GM12878 (cell line): ENCODE measurements at regions of chr18 and their contacts with region 1.

Region 1: DNA sequence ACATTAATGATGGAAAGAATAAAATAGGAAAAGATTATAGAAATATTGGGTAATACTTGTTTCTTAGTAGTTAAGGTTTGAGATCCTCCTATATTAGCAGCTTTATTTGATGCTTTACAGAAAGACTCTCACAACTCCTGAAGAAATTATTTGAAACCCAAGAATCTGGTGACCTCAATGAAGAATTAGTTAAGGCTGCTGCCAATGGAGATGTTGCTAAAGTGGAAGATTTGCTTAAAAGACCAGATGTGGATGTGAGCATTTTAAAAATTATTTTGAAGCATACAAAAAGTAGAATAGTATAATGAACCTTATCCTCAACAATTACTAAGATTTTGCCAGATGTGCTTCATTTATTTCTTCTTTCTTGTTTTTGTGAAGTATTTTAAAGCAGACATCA is 59.1 kb downstream of the MIB1 start:
- DNase-seq: no peak
- ATAC-seq: no peak
- H3K4me3 ChIP-seq: no peak overlapping the region
- H3K27ac ChIP-seq: no peak overlapping the region
- H3K4me1 ChIP-seq: no peaks in the 10 kb centered on the region
- H3K27me3 ChIP-seq: no peaks in the 10 kb centered on the region
- CTCF ChIP-seq: no peak
- EP300 ChIP-seq: no peak
- POLR2A ChIP-seq: no peak
- RAD21 ChIP-seq: no peak

Region 2: GRCh38 chr18:21656402-21656801 is 143.3 kb before region 1 on chr18:
- CTCF ChIA-PET with region 1: no interaction called
- POLR2A ChIA-PET with region 1: no interaction called
- RAD21 ChIA-PET with region 1: no interaction called
- SMC1A ChIA-PET with region 1: no interaction called
- in situ Hi-C with region 1: no loop called
- intact Hi-C with region 1: no loop called
- DNase-seq: no peak
- ATAC-seq: no peak
- H3K4me3 ChIP-seq: no peak overlapping the region
- H3K27ac ChIP-seq: no peak overlapping the region
- H3K4me1 ChIP-seq: no peaks in the 10 kb centered on the region; the same call in 1 of the 2 replicates
- H3K27me3 ChIP-seq: no peaks in the 10 kb centered on the region
- CTCF ChIP-seq: no peak
- EP300 ChIP-seq: no peak
- POLR2A ChIP-seq: no peak
- RAD21 ChIP-seq: no peak

Region 3: GRCh38 chr18:21714474-21714873 is 85.2 kb before region 1 on chr18:
- CTCF ChIA-PET with region 1: no interaction called
- POLR2A ChIA-PET with region 1: no interaction called
- RAD21 ChIA-PET with region 1: no interaction called
- SMC1A ChIA-PET with region 1: no interaction called
- in situ Hi-C with region 1: no loop called
- intact Hi-C with region 1: no loop called
- DNase-seq: no peak
- ATAC-seq: no peak
- H3K4me3 ChIP-seq: no peak overlapping the region
- H3K27ac ChIP-seq: no peak overlapping the region
- H3K4me1 ChIP-seq: no peaks in the 10 kb centered on the region; the same call in 1 of the 2 replicates
- H3K27me3 ChIP-seq: no peaks in the 10 kb centered on the region
- CTCF ChIP-seq: no peak
- EP300 ChIP-seq: no peak
- POLR2A ChIP-seq: no peak
- RAD21 ChIP-seq: no peak

Region 4: GRCh38 chr18:21777814-21778213 is 21.9 kb before region 1 on chr18:
- CTCF ChIA-PET with region 1: no interaction called
- POLR2A ChIA-PET with region 1: no interaction called
- RAD21 ChIA-PET with region 1: no interaction called
- SMC1A ChIA-PET with region 1: interaction called, 3 read pairs
- in situ Hi-C with region 1: no loop called
- intact Hi-C with region 1: loop called (anchors 1 kb)
- DNase-seq: peak; percentile 31
- ATAC-seq: peak; percentile 83
- H3K4me3 ChIP-seq: no peak overlapping the region
- H3K27ac ChIP-seq: peak overlapping the region; percentile 61
- H3K4me1 ChIP-seq: peaks cover 20% of the 10 kb centered on the region
- H3K27me3 ChIP-seq: no peaks in the 10 kb centered on the region
- CTCF ChIP-seq: no peak
- EP300 ChIP-seq: no peak
- POLR2A ChIP-seq: no peak
- RAD21 ChIP-seq: no peak